Common myeloid progenitor, CD34-positive (primary cell): ENCODE measurements at regions of chr17 and their contacts with region 1.

Region 1: GRCh38 chr17:28644985-28645939 is at the start of gene BLTP2:
- DNase-seq: peak; percentile 95 to 97 (median 97)
- H3K4me3 ChIP-seq: peak within 1 kb of the TSS; percentile 73 to 98 (median 96)
- H3K27ac ChIP-seq: peak within 1 kb of the TSS; percentile 61 to 90
- H3K4me1 ChIP-seq: peaks cover 18 to 35% (median 32%) of the 10 kb centered on the region in 4 experiments
- H3K27me3 ChIP-seq: no peaks in the 10 kb centered on the region

Region 2: GRCh38 chr17:28661635-28662537 is 16.6 kb after region 1 on chr17 and contains the starts of genes SDF2 and SUPT6H:
- CTCF ChIA-PET with region 1: interaction called, 41 read pairs
- POLR2A ChIA-PET with region 1: interaction called, 31 read pairs
- DNase-seq: peak; percentile 94 to 97 (median 97)
- H3K4me3 ChIP-seq: peak within 1 kb of the TSS; percentile 90 to 100 (median 96)
- H3K27ac ChIP-seq: peak within 1 kb of the TSS; percentile 99 to 100
- H3K4me1 ChIP-seq: peaks cover 7 to 23% (median 19%) of the 10 kb centered on the region in 4 experiments
- H3K27me3 ChIP-seq: no peaks in the 10 kb centered on the region

Region 3: GRCh38 chr17:28667870-28668269 is 22.6 kb after region 1 on chr17:
- CTCF ChIA-PET with region 1: interaction called, 41 read pairs
- POLR2A ChIA-PET with region 1: interaction called, 31 read pairs
- DNase-seq: no peak
- H3K4me3 ChIP-seq: no peak overlapping the region
- H3K27ac ChIP-seq: no peak overlapping the region
- H3K4me1 ChIP-seq: peaks cover 6 to 9% (median 7%) of the 10 kb centered on the region in 4 experiments
- H3K27me3 ChIP-seq: no peaks in the 10 kb centered on the region

Region 4: GRCh38 chr17:28675980-28676379 is 30.7 kb after region 1 on chr17:
- CTCF ChIA-PET with region 1: interaction called, 36 read pairs
- POLR2A ChIA-PET with region 1: no interaction called
- DNase-seq: peak; percentile 11 to 35 (median 32)
- H3K4me3 ChIP-seq: no peak overlapping the region
- H3K27ac ChIP-seq: no peak overlapping the region
- H3K4me1 ChIP-seq: no peaks in the 10 kb centered on the region
- H3K27me3 ChIP-seq: no peaks in the 10 kb centered on the region